ENCODE measurements at regions of chr12 and their contacts with region 1.

Region 1: DNA sequence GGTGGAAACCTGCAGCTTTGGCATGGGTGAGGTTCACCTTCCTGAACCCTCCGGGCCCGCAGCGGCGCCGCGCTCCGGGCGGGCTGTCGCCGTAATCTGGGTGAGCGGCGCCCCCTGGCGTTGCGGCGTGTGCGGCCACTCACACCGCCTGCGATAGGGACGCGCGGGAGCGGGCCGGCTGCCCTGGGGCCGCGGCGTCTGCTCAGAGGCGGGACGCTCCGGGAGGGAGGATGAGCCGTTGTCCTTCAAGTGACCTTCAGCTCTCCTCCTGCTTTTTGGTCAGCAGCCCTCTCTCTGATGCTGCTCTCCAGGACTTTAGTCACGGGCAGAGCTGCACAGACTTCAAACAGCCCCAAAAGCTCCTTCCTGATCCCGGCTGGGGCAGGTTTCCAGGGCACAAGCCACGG is 211.7 kb upstream of the FKBP4 start:
- DNase-seq: peak; percentile 63 to 89 (median 70)
- ATAC-seq: peak; percentile 65 to 89 (median 84)
- H3K4me3 ChIP-seq: peak overlapping the region in 5 of 12 donors; percentile 4 to 20 (median 11)
- H3K27ac ChIP-seq: peak overlapping the region in 7 of 12 donors; percentile 24 to 76 (median 48)
- H3K4me1 ChIP-seq: peaks cover 0 to 18% (median 11%) of the 10 kb centered on the region in 12 donors
- H3K27me3 ChIP-seq: peaks cover 0 to 6% (median 0%) of the 10 kb centered on the region in 9 donors
- CTCF ChIP-seq: peak; percentile 80 to 96 (median 91)
- POLR2A ChIP-seq: no peak

Region 2: DNA sequence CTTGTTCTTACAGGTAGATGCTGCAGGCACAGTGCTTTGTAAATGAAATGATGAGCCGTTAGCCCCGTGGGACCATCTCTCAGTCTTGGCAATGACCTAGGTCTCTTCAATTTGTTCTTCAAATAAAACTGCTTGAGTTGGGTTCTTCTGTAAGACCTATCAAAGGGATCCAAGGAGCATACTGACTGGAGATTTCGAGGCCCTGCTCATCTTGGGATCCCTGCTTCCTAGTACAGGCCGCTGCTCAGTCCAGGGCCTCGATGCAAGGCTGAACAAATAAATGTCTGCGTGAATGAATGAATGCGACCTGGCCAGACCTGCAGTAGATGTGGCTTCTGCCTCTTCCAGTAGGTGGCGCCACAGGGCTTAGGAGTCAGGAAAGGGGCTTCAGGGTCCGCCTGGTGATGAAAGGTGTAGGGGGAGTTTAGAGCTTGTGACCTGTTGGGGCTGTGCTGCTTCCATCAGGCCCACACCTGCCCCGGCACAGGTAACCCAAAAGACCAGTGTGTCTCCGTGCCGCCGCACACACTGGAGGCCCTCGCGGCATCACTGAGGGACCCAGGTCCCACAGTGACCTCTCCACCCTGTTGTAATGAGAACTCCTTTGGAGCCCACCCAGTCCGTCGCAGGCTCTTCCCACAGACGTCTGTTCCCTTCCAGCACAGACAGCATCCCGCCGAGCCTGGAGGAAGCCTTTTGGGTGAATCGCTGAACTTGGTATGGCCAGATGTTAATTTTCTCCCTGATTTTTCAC is 525.9 kb before region 1 on chr12:
- intact Hi-C with region 1: loop called in 7 of 10 experiments (anchors 1 to 10 kb)
- DNase-seq: peak; percentile 58 to 78 (median 69)
- ATAC-seq: peak; percentile 8 to 22 (median 8)
- H3K4me3 ChIP-seq: peak overlapping the region in 2 of 12 donors; percentile 1 to 39
- H3K27ac ChIP-seq: peak overlapping the region in 8 of 12 donors; percentile 14 to 91 (median 56)
- H3K4me1 ChIP-seq: peaks cover 0 to 80% (median 28%) of the 10 kb centered on the region in 12 donors
- H3K27me3 ChIP-seq: peaks cover 0 to 32% (median 0%) of the 10 kb centered on the region in 9 donors
- CTCF ChIP-seq: peak; percentile 59 to 81 (median 70)
- POLR2A ChIP-seq: no peak

Region 3: DNA sequence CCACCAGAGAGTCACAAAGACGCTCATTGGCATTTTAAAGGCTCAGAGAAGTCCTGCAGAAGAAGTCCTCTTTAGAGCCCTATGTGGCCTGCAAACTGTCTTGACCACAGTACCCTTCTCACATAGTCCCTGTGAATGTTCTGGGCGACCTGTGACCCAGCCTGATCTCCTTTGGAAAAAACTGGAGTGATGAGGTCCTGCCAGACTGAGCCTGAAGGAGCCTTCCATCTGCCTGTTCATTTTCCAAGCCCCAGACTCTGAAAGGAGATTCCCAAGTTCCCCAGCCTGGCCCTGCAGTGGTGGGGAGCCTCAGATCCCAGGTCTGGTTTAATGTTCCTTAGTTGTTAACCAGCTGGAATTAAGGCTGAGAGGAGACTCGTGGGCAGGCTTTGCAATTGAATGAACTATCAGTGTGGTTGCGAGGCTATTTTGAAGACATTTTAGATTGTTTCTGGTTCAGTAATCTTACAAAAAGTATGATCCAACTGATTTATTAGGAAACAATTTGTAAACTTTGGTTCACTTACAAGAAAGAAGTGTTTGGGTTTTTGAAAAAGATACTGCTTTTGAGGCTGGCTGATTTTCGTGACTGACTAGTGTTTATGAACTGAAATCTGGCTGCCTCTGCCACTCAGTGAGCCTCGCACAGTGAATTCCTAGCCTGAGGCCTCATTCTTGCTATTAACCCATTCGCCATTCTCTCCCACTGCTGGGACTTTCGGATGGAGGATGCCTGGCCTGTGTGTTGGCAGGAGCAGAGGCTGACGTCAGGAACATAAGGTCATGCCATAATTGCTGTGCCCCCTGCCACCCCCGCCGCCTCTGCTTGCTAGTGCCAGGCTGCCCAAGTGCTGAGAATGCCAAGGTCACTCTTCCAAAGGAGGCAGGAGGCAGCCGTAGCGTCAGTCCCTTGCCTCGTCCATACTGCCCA is 281.3 kb before region 1 on chr12:
- intact Hi-C with region 1: loop called in 2 of 10 experiments (anchors 10 kb)
- DNase-seq: peak in 4 of 5 donors; percentile 73 to 87 (median 78)
- ATAC-seq: peak; percentile 66 to 80 (median 78)
- H3K4me3 ChIP-seq: no peak overlapping the region
- H3K27ac ChIP-seq: peak overlapping the region in 11 of 12 donors; percentile 51 to 89 (median 68)
- H3K4me1 ChIP-seq: peaks cover 0 to 97% (median 63%) of the 10 kb centered on the region in 12 donors
- H3K27me3 ChIP-seq: no peaks in the 10 kb centered on the region
- CTCF ChIP-seq: no peak
- POLR2A ChIP-seq: no peak

Region 4: DNA sequence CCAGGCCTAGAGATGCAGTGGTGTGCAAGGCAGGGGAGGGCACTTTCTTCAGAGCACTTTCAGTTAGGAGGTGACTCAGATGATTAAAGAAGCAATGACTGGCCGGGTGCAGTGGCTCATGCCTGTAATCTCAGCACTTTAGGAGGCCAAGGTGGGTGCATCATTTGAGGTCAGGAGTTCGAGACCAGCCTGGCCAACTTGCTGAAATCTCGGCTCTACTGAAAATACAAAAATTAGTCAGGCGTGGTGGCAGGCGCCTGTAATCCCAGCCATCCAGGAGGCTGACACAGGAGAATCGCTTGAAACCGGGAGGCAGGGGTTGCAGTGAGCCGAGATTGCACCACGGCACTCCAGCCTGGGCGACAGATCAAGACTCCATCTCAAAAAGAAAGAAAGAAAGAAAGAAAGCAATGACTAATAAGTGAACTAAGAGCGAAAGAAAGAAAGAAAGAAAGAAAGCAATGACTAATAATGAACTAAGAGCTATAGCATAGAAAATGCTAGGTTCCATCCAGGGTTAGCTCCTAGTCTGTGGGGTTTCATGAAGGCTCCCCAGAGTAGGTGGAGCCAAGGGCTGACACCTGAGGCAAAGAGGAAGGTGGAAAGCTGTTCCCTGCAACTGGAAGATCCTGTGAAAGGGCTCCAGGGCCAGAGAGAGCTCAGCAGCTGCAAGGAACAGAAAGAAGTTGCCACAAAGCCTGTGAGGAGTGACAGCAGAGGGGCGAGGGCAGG is 195.8 kb before region 1 on chr12:
- intact Hi-C with region 1: loop called in 7 of 10 experiments (anchors 5 to 10 kb)
- DNase-seq: no peak
- ATAC-seq: no peak
- H3K4me3 ChIP-seq: no peak overlapping the region
- H3K27ac ChIP-seq: no peak overlapping the region
- H3K4me1 ChIP-seq: peaks cover 3 to 83% (median 46%) of the 10 kb centered on the region in 12 donors
- H3K27me3 ChIP-seq: no peaks in the 10 kb centered on the region
- CTCF ChIP-seq: no peak
- POLR2A ChIP-seq: no peak

Region 5: DNA sequence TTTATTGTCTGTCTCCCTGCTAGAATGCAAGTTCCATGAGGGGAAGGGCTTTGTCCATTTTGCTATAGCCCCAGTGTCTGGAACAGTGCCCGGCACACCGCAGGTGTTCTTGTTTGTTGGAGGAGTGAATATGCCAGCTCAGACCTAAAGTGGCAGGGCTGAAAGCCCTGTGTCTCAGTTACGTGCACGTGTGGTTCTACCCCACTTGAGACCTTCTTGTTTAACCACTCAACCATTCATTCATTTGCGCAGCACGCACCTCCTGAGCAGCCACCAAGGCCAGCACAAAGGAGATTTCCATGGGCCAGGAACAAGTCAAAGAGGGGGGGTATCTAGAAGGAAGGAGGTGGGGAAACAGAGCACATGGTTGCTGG is 126.3 kb before region 1 on chr12:
- intact Hi-C with region 1: loop called in 1 of 10 experiments (anchors 5 kb)
- DNase-seq: no peak
- ATAC-seq: no peak
- H3K4me3 ChIP-seq: no peak overlapping the region
- H3K27ac ChIP-seq: peak overlapping the region; percentile 54 to 87 (median 78)
- H3K4me1 ChIP-seq: peaks cover 4 to 46% (median 22%) of the 10 kb centered on the region in 12 donors
- H3K27me3 ChIP-seq: no peaks in the 10 kb centered on the region
- CTCF ChIP-seq: no peak
- POLR2A ChIP-seq: no peak

Region 6: GRCh38 chr12:2510045-2510444 is 73.0 kb before region 1 on chr12:
- intact Hi-C with region 1: no loop called
- DNase-seq: peak in 4 of 5 donors; percentile 57 to 82 (median 69)
- ATAC-seq: peak; percentile 73 to 86 (median 84)
- H3K4me3 ChIP-seq: no peak overlapping the region
- H3K27ac ChIP-seq: peak overlapping the region in 3 of 12 donors; percentile 3 to 57 (median 47)
- H3K4me1 ChIP-seq: peaks cover 0 to 31% (median 6%) of the 10 kb centered on the region in 12 donors
- H3K27me3 ChIP-seq: no peaks in the 10 kb centered on the region
- CTCF ChIP-seq: no peak
- POLR2A ChIP-seq: no peak